Activated naive CD4-positive, alpha-beta T cell treated with anti-CD3 and anti-CD28 coated beads, Interleukin-2, amount 10 ng/mL, durations not matched to agents 7 days and 5 days (primary cell): ENCODE measurements at regions of chr21 and their contacts with region 1.

Region 1: GRCh38 chr21:15483138-15483780 is 246.5 kb upstream of the USP25 start:
- DNase-seq: peak; percentile 84
- H3K4me3 Mint-ChIP-seq: no peak overlapping the region
- H3K27ac Mint-ChIP-seq: no peak overlapping the region
- H3K4me1 Mint-ChIP-seq: peaks cover 8% of the 10 kb centered on the region
- H3K27me3 Mint-ChIP-seq: no peaks in the 10 kb centered on the region

Region 2: DNA sequence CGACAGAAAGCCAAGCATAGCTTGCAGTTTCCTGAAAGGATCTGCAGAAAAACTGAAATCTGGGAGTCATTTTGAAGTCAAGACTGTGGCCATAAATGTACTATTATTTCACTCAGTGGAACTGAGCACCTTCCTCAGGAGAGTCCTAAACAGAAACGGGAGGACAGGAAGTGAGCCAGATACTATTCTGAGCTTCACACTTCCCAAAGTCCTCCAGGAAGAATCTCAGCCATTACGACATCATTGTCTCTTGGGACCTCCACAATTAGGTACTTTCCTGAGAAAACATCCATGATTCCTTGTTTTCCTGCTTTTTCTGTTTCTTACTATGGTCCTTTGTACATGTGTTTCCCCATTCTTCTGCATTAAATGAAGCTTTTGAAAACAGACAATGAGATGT is 52.7 kb before region 1 on chr21:
- CTCF ChIA-PET with region 1: no interaction called
- DNase-seq: no peak
- H3K4me3 Mint-ChIP-seq: no peak overlapping the region
- H3K27ac Mint-ChIP-seq: no peak overlapping the region
- H3K4me1 Mint-ChIP-seq: no peaks in the 10 kb centered on the region
- H3K27me3 Mint-ChIP-seq: no peaks in the 10 kb centered on the region

Region 3: GRCh38 chr21:15449556-15449955 is 33.7 kb before region 1 on chr21:
- CTCF ChIA-PET with region 1: no interaction called
- DNase-seq: no peak
- H3K4me3 Mint-ChIP-seq: no peak overlapping the region
- H3K27ac Mint-ChIP-seq: no peak overlapping the region
- H3K4me1 Mint-ChIP-seq: no peaks in the 10 kb centered on the region
- H3K27me3 Mint-ChIP-seq: no peaks in the 10 kb centered on the region

Region 4: GRCh38 chr21:15552914-15553494 is 69.7 kb after region 1 on chr21:
- CTCF ChIA-PET with region 1: interaction called, 11 read pairs
- DNase-seq: no peak
- H3K4me3 Mint-ChIP-seq: no peak overlapping the region
- H3K27ac Mint-ChIP-seq: no peak overlapping the region
- H3K4me1 Mint-ChIP-seq: peaks cover 9% of the 10 kb centered on the region
- H3K27me3 Mint-ChIP-seq: no peaks in the 10 kb centered on the region